ENCODE measurements at regions of chr6 and their contacts with region 1.

Region 1: GRCh38 chr6:160386869-160387530 is 38.8 kb downstream of the SLC22A3 start:
- DNase-seq: peak; percentile 66 to 92
- ATAC-seq: peak; percentile 80 to 89
- H3K4me3 ChIP-seq: no peak overlapping the region
- H3K27ac ChIP-seq: peak overlapping the region; percentile 68 to 82 (median 78)
- H3K4me1 ChIP-seq: peaks cover 26 to 45% of the 10 kb centered on the region in 2 donors
- H3K27me3 ChIP-seq: no peaks in the 10 kb centered on the region
- CTCF ChIP-seq: peak in 3 of 5 experiments; percentile 10 to 42 (median 23)
- POLR2A ChIP-seq: no peak

Region 2: GRCh38 chr6:160348142-160349019 is 38.6 kb before region 1 on chr6 and contains the start of gene SLC22A3:
- in situ Hi-C with region 1: no loop called
- intact Hi-C with region 1: loop called (anchors 5 kb)
- DNase-seq: peak in 1 of 2 donors; percentile 55
- ATAC-seq: peak; percentile 71 to 77
- H3K4me3 ChIP-seq: peak within 1 kb of the TSS; percentile 77 to 96 (median 84)
- H3K27ac ChIP-seq: peak within 1 kb of the TSS; percentile 84 to 95 (median 89)
- H3K4me1 ChIP-seq: peaks cover 4% of the 10 kb centered on the region in 2 donors
- H3K27me3 ChIP-seq: peaks cover 0 to 9% (median 3%) of the 10 kb centered on the region in 3 donors
- CTCF ChIP-seq: peak in 3 of 5 experiments; percentile 24 to 42 (median 40)
- POLR2A ChIP-seq: peak; percentile 71 to 73
- total RNA-seq, gene SLC22A3: 49.5 to 75.4 (median 58.2) TPM

Region 3: GRCh38 chr6:160697826-160698225 is 310.8 kb after region 1 on chr6:
- in situ Hi-C with region 1: no loop called
- intact Hi-C with region 1: no loop called
- DNase-seq: no peak
- ATAC-seq: no peak
- H3K4me3 ChIP-seq: no peak overlapping the region
- H3K27ac ChIP-seq: no peak overlapping the region
- H3K4me1 ChIP-seq: no peaks in the 10 kb centered on the region
- H3K27me3 ChIP-seq: no peaks in the 10 kb centered on the region
- CTCF ChIP-seq: no peak
- POLR2A ChIP-seq: no peak